Heart right ventricle (tissue), 16 donors: ENCODE measurements at regions of chrX and their contacts with region 1.

Region 1: GRCh38 chrX:99480728-99481127 is 929.3 kb downstream of the PCDH19 start:
- DNase-seq: no peak
- ATAC-seq: no peak
- H3K4me3 ChIP-seq: no peak overlapping the region
- H3K27ac ChIP-seq: no peak overlapping the region
- H3K4me1 ChIP-seq: no peaks in the 10 kb centered on the region
- H3K27me3 ChIP-seq: no peaks in the 10 kb centered on the region
- CTCF ChIP-seq: no peak

Region 2: DNA sequence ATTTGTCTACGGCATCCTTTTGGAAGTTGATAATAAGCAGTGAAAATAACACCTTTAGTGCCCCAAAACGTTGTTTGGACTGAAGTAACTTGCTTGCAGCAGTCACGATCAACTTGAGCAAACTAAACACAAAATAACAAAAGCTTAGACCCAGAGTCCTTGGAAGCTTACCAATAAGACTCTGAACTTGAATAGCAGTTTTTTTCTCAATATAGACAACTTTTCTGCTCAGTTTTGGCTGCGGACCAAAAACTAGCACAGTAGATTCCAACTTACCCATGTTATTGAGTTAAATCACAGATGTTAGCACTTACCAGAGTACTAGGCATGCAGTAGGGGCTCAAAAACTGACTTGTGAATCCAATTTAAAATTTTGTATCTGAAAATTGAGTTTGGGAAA is 182.4 kb after region 1 on chrX:
- intact Hi-C with region 1: loop called in 1 of 10 experiments (anchors 5 kb)
- DNase-seq: no peak
- ATAC-seq: no peak
- H3K4me3 ChIP-seq: no peak overlapping the region
- H3K27ac ChIP-seq: no peak overlapping the region
- H3K4me1 ChIP-seq: no peaks in the 10 kb centered on the region
- H3K27me3 ChIP-seq: no peaks in the 10 kb centered on the region
- CTCF ChIP-seq: no peak

Region 3: DNA sequence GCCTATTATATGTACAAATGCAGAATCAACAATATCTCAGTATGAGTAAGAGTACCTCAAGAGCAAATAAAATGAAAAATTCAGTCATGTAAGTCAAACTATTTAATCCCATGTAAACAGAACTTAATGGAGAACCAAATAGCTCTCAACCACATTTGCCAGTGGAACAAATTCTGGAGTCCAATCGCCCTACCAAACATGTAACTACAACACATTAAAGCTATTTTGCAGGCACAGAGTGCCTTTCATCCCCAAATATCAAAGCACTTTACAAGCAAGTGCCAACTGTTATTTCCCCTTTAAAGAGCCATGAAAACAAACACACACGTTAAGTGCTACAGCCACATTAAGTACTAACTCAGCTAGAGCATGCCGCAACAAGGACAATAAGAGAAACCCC is 878.0 kb after region 1 on chrX:
- intact Hi-C with region 1: no loop called
- DNase-seq: no peak
- ATAC-seq: no peak
- H3K4me3 ChIP-seq: no peak overlapping the region
- H3K27ac ChIP-seq: no peak overlapping the region
- H3K4me1 ChIP-seq: no peaks in the 10 kb centered on the region
- H3K27me3 ChIP-seq: peaks cover 0 to 58% (median 0%) of the 10 kb centered on the region in 7 donors
- CTCF ChIP-seq: no peak